K562 (cell line): ENCODE measurements at regions of chr1 and their contacts with region 1.

Region 1: GRCh38 chr1:151994956-151995355 is 1.3 kb upstream of the S100A10 start:
- DNase-seq: no peak
- ATAC-seq: no peak
- H3K4me3 ChIP-seq: no peak overlapping the region
- H3K27ac ChIP-seq: no peak overlapping the region
- H3K4me1 ChIP-seq: peaks cover 15 to 26% of the 10 kb centered on the region in 2 experiments
- H3K27me3 ChIP-seq: peaks cover 25 to 41% of the 10 kb centered on the region in 2 experiments
- CTCF ChIP-seq: no peak
- EP300 ChIP-seq: no peak
- POLR2A ChIP-seq: no peak
- RAD21 ChIP-seq: no peak

Region 2: GRCh38 chr1:151888972-151889570 is 105.9 kb before region 1 on chr1:
- CTCF ChIA-PET with region 1: interaction called, 46 read pairs
- POLR2A ChIA-PET with region 1: no interaction called
- in situ Hi-C with region 1: no loop called
- intact Hi-C with region 1: no loop called
- DNase-seq: no peak
- ATAC-seq: no peak; the same call in 2 of the 3 replicates
- H3K4me3 ChIP-seq: no peak overlapping the region
- H3K27ac ChIP-seq: no peak overlapping the region
- H3K4me1 ChIP-seq: peaks cover 0 to 10% of the 10 kb centered on the region in 2 experiments; a peak in 2 of 5 replicates
- H3K27me3 ChIP-seq: no peaks in the 10 kb centered on the region
- CTCF ChIP-seq: peak in 2 of 3 experiments; percentile 25 to 57; a peak in 2 of 6 replicates
- EP300 ChIP-seq: no peak
- POLR2A ChIP-seq: no peak
- RAD21 ChIP-seq: peak; percentile 56 to 64

Region 3: DNA sequence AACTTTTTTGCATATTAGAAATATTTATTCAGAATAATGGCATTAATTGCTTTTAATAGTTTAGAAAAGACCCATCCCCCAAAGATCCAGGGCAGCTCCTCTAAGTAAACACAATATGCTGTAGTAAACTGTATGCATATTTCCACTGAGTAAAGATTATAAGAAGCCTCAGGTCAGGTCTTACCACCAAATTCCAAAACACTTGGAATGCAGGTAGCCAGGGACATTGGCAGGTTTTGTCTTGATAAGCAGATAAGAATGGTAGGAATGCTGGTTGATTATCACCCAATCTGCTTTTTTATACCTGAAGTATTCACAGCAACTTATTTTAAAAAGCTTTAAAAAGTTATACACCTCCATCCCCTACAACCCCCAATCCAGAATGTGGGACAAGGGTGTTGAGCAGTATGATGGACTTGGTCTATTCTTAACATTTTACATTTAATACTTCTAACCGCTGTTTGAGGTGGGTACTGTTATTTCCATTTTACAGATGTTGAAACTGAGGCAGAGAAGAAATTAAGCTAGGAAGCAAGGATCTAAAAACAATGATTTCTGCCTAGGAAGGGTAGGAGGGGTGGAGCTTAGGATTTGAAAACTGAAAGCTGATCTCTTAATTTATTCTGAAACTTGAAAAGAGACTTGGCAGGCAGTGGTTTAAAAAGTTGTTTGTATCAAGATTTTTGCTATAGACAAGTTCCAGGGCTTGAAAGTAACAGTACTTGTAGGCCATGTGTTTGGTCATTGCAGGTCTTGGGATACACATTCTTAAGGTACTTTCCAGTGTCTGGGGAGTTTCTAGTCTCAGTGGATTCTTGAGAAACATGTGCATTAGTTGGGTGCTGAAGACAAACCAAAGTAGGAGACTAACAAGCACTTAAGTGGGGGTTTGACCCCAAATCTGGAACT is 70.0 kb before region 1 on chr1:
- CTCF ChIA-PET with region 1: no interaction called
- POLR2A ChIA-PET with region 1: no interaction called
- in situ Hi-C with region 1: no loop called
- intact Hi-C with region 1: no loop called
- DNase-seq: no peak
- ATAC-seq: no peak
- H3K4me3 ChIP-seq: no peak overlapping the region
- H3K27ac ChIP-seq: no peak overlapping the region
- H3K4me1 ChIP-seq: peaks cover 7 to 25% of the 10 kb centered on the region in 2 experiments
- H3K27me3 ChIP-seq: no peaks in the 10 kb centered on the region
- CTCF ChIP-seq: no peak
- EP300 ChIP-seq: no peak
- POLR2A ChIP-seq: no peak
- RAD21 ChIP-seq: no peak

Region 4: DNA sequence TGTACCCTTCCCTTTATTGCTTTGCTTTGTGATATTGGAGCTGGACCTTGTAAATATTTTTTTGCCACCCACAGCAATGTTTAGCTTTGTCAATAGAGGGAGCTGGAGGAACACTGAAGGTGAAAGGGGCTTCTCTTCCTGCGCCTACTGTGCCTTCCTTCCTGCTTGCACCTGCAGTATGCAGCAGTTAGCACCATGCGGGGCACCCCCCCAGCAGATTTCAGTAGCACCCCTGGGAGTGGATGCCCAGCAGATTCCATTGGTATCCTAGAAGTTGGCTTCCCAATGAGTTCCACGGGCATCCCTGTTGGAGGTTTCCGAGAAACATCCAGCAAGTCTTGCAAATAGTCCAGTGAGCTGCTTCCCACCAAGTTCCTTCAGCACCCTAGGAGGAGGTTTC is 26.9 kb before region 1 on chr1:
- CTCF ChIA-PET with region 1: interaction called, 32 read pairs
- POLR2A ChIA-PET with region 1: interaction called, 3 read pairs
- in situ Hi-C with region 1: no loop called
- intact Hi-C with region 1: loop called (anchors 1 kb)
- DNase-seq: peak in 2 of 4 experiments; percentile 51 to 68
- ATAC-seq: peak; percentile 83
- H3K4me3 ChIP-seq: no peak overlapping the region
- H3K27ac ChIP-seq: no peak overlapping the region
- H3K4me1 ChIP-seq: peaks cover 0 to 9% of the 10 kb centered on the region in 2 experiments; a peak in 4 of 5 replicates
- H3K27me3 ChIP-seq: peaks cover 0 to 4% of the 10 kb centered on the region in 2 experiments; a peak in 2 of 5 replicates
- CTCF ChIP-seq: peak; percentile 81 to 94 (median 83)
- EP300 ChIP-seq: no peak
- POLR2A ChIP-seq: no peak
- RAD21 ChIP-seq: peak; percentile 87 to 95